SK-N-SH (cell line): ENCODE measurements at regions of chr15 and their contacts with region 1.

Region 1: GRCh38 chr15:100918034-100918689 is 995 bp upstream of the LRRK1 start:
- DNase-seq: peak; percentile 93
- H3K4me3 ChIP-seq: peak overlapping the region; percentile 67 to 73
- H3K27ac ChIP-seq: peak overlapping the region in 1 of 2 experiments; percentile 16; a peak in 1 of 4 replicates
- H3K4me1 ChIP-seq: peaks cover 0 to 29% of the 10 kb centered on the region in 2 experiments; a peak in 1 of 4 replicates
- H3K27me3 ChIP-seq: no peaks in the 10 kb centered on the region
- CTCF ChIP-seq: peak; percentile 71
- EP300 ChIP-seq: no peak
- RAD21 ChIP-seq: peak; percentile 64

Region 2: DNA sequence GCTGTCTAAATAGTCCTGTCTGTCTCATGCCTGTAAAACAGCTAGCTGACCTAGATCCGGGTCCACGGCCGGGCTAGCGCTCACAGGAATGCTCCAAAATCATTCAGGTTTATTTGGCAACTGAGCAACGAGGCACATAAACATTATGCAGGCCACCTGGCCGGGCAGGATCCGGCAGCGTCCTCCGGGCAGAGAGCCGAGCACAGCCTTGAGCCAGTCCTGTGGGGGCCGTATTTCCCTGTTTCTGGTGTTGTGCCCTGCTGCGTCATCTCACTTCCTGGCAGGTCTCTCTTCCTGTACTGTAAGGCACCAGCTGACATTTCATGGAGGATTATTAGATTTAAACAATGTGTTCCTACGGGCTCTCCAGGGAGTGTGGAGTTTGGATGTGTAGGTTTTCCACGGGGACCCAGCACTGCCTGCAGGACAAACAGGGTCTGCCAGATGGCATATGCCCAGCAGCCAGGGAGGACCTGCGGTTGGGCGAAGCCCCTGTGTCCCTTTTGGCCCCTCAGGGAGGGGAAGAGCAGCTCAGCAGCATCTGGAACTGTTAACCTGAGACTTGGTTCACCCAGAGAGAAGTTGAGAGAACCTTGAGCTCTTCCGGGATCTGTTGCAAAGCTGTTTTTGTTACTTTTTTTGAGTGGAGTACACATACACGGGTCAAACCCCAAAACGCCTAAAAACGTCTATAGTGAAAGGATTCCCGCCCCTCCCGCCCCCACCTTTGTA is 15.6 kb before region 1 on chr15:
- CTCF ChIA-PET with region 1: interaction called, 86 read pairs
- POLR2A ChIA-PET with region 1: interaction called, 9 read pairs
- DNase-seq: peak; percentile 87
- H3K4me3 ChIP-seq: peak overlapping the region; percentile 26 to 33; a peak in 3 of 4 replicates
- H3K27ac ChIP-seq: peak overlapping the region; percentile 60 to 98
- H3K4me1 ChIP-seq: peaks cover 12 to 44% of the 10 kb centered on the region in 2 experiments
- H3K27me3 ChIP-seq: no peaks in the 10 kb centered on the region
- CTCF ChIP-seq: no peak
- EP300 ChIP-seq: peak in 1 of 2 experiments; percentile 75; a peak in 2 of 4 replicates
- RAD21 ChIP-seq: peak; percentile 36

Region 3: GRCh38 chr15:100929641-100930042 is 11.5 kb after region 1 on chr15:
- CTCF ChIA-PET with region 1: interaction called, 33 read pairs
- POLR2A ChIA-PET with region 1: no interaction called
- DNase-seq: no peak
- H3K4me3 ChIP-seq: no peak overlapping the region
- H3K27ac ChIP-seq: peak overlapping the region in 1 of 2 experiments; percentile 43; a peak in 1 of 4 replicates
- H3K4me1 ChIP-seq: peaks cover 0 to 10% of the 10 kb centered on the region in 2 experiments; a peak in 2 of 4 replicates
- H3K27me3 ChIP-seq: no peaks in the 10 kb centered on the region
- CTCF ChIP-seq: no peak
- EP300 ChIP-seq: no peak
- RAD21 ChIP-seq: no peak

Region 4: DNA sequence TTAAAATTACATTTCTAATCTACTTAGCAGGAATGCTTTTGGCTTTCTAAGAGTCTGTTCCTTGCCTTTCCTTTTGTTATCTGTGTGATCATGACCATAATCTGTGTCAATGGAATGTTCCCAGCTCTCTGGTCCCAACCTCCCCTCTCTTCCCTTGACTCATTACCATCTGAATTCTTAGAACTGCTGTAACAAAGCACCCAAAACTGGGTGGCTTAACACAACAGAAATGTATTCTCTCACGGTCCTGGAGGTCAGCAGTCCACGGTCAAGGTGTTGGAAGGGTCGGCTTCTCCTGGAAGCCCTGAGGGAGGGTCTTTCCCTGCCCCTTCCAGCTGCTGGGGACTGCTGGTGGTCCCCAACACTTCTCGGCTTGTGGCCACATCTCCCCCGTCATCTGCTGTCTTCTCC is 82.1 kb after region 1 on chr15:
- CTCF ChIA-PET with region 1: interaction called, 156 read pairs
- POLR2A ChIA-PET with region 1: no interaction called
- DNase-seq: no peak
- H3K4me3 ChIP-seq: no peak overlapping the region
- H3K27ac ChIP-seq: peak overlapping the region in 1 of 2 experiments; percentile 73; a peak in 2 of 4 replicates
- H3K4me1 ChIP-seq: peaks cover 3 to 16% of the 10 kb centered on the region in 2 experiments
- H3K27me3 ChIP-seq: no peaks in the 10 kb centered on the region
- CTCF ChIP-seq: no peak
- EP300 ChIP-seq: no peak
- RAD21 ChIP-seq: no peak

Region 5: GRCh38 chr15:101078682-101079323 is 160.6 kb after region 1 on chr15:
- CTCF ChIA-PET with region 1: no interaction called
- POLR2A ChIA-PET with region 1: no interaction called
- DNase-seq: no peak
- H3K4me3 ChIP-seq: no peak overlapping the region
- H3K27ac ChIP-seq: no peak overlapping the region
- H3K4me1 ChIP-seq: no peaks in the 10 kb centered on the region; a peak in 1 of 4 replicates
- H3K27me3 ChIP-seq: no peaks in the 10 kb centered on the region
- CTCF ChIP-seq: no peak
- EP300 ChIP-seq: no peak
- RAD21 ChIP-seq: no peak